Heart left ventricle (tissue), 16 donors: ENCODE measurements at regions of chr14 and their contacts with region 1.

Region 1: DNA sequence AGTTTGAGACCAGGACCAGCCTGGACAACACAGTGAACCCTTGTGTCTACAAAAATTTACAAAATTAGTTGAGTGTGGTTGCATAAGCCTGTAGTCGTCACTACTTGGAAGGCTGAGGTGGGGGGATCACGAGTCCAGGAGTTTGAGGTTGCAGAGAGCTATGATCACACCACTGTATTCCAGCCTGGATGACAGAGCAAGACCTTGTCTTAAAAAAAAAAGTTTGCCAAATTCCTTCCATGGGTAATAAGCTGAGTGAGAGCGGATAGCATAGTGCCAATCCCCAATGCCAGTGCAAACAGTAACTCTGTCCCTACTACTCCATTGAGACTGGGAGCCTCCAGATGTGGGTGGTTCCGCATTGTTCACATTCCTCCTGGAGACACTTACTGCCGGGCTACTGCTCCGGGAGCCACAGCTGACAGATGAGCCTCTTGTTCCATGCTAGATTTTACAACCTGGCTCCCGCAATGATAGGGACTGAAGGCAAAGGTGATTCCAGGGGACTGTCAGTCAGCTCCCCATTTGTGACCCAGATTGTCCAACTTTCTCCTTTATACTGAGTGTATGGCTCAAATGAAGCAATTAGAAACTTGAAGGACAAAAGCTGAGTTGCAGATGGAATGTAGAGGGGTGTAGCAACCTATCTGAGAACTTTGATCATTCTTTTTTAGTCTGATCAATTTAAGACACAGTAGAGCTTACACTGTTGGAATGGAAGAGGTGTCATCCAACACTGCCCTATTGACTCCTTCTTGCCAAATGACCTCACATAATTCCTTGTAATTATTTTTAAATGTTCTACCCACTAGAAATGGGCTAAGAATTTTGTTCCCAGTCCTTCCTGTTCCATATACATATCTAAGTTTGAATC is 13.4 kb upstream of the FRMD6 start:
- DNase-seq: no peak
- ATAC-seq: peak; percentile 55 to 65 (median 64)
- H3K4me3 ChIP-seq: no peak overlapping the region
- H3K27ac ChIP-seq: no peak overlapping the region
- H3K4me1 ChIP-seq: peaks cover 0 to 14% (median 0%) of the 10 kb centered on the region in 12 donors
- H3K27me3 ChIP-seq: no peaks in the 10 kb centered on the region
- CTCF ChIP-seq: no peak
- POLR2A ChIP-seq: no peak

Region 2: DNA sequence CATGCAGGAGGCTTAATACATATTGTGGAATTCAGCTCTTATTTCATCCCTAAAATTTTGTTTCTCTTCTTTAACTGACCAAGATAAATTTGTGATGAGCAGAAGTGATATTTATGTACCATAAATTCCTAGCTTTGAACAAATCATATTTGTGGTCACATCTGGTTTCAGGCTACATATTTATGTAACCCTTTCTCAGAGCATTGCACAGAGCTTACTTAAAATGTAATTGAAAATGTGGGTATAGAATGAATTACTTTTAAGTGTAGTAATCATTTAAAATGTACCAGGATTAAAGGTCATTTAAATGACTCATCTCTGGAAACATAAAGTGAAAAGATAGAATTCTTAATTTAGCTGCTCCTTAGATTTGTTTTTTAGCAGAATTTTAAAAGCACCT is 116.5 kb before region 1 on chr14:
- intact Hi-C with region 1: loop called in 1 of 10 experiments (anchors 10 kb)
- DNase-seq: no peak
- ATAC-seq: no peak
- H3K4me3 ChIP-seq: no peak overlapping the region
- H3K27ac ChIP-seq: no peak overlapping the region
- H3K4me1 ChIP-seq: peaks cover 0 to 5% (median 0%) of the 10 kb centered on the region in 12 donors
- H3K27me3 ChIP-seq: no peaks in the 10 kb centered on the region
- CTCF ChIP-seq: no peak
- POLR2A ChIP-seq: no peak

Region 3: GRCh38 chr14:51554953-51555352 is 83.4 kb before region 1 on chr14:
- intact Hi-C with region 1: loop called in 1 of 10 experiments (anchors 10 kb)
- DNase-seq: no peak
- ATAC-seq: no peak
- H3K4me3 ChIP-seq: no peak overlapping the region
- H3K27ac ChIP-seq: no peak overlapping the region
- H3K4me1 ChIP-seq: no peaks in the 10 kb centered on the region
- H3K27me3 ChIP-seq: no peaks in the 10 kb centered on the region
- CTCF ChIP-seq: peak in 1 of 12 donors; percentile 18
- POLR2A ChIP-seq: no peak

Region 4: GRCh38 chr14:51744372-51745130 is 106.2 kb after region 1 on chr14:
- intact Hi-C with region 1: no loop called
- DNase-seq: no peak
- ATAC-seq: no peak
- H3K4me3 ChIP-seq: no peak overlapping the region
- H3K27ac ChIP-seq: no peak overlapping the region
- H3K4me1 ChIP-seq: no peaks in the 10 kb centered on the region
- H3K27me3 ChIP-seq: no peaks in the 10 kb centered on the region
- CTCF ChIP-seq: no peak
- POLR2A ChIP-seq: no peak